HepG2 (cell line): ENCODE measurements at regions of chr19 and their contacts with region 1.

Region 1: GRCh38 chr19:44689056-44689895 is 9.7 kb upstream of the CEACAM16 start:
- DNase-seq: peak; percentile 63
- ATAC-seq: peak; percentile 85
- H3K4me3 ChIP-seq: peak overlapping the region in 2 of 3 experiments; percentile 18 to 52; a peak in 2 of 6 replicates
- H3K27ac ChIP-seq: no peak overlapping the region
- H3K4me1 ChIP-seq: peaks cover 63% of the 10 kb centered on the region
- H3K27me3 ChIP-seq: no peaks in the 10 kb centered on the region
- CTCF ChIP-seq: peak; percentile 97
- EP300 ChIP-seq: no peak
- POLR2A ChIP-seq: no peak
- RAD21 ChIP-seq: peak; percentile 93

Region 2: GRCh38 chr19:44712864-44713515 is 23.7 kb after region 1 on chr19:
- CTCF ChIA-PET with region 1: interaction called, 3 read pairs
- POLR2A ChIA-PET with region 1: interaction called, 94 read pairs
- in situ Hi-C with region 1: no loop called
- intact Hi-C with region 1: loop called (anchors 2 kb)
- DNase-seq: peak; percentile 65
- ATAC-seq: peak; percentile 80
- H3K4me3 ChIP-seq: no peak overlapping the region
- H3K27ac ChIP-seq: no peak overlapping the region
- H3K4me1 ChIP-seq: peaks cover 37% of the 10 kb centered on the region
- H3K27me3 ChIP-seq: no peaks in the 10 kb centered on the region
- CTCF ChIP-seq: no peak
- EP300 ChIP-seq: no peak
- POLR2A ChIP-seq: no peak
- RAD21 ChIP-seq: no peak

Region 3: DNA sequence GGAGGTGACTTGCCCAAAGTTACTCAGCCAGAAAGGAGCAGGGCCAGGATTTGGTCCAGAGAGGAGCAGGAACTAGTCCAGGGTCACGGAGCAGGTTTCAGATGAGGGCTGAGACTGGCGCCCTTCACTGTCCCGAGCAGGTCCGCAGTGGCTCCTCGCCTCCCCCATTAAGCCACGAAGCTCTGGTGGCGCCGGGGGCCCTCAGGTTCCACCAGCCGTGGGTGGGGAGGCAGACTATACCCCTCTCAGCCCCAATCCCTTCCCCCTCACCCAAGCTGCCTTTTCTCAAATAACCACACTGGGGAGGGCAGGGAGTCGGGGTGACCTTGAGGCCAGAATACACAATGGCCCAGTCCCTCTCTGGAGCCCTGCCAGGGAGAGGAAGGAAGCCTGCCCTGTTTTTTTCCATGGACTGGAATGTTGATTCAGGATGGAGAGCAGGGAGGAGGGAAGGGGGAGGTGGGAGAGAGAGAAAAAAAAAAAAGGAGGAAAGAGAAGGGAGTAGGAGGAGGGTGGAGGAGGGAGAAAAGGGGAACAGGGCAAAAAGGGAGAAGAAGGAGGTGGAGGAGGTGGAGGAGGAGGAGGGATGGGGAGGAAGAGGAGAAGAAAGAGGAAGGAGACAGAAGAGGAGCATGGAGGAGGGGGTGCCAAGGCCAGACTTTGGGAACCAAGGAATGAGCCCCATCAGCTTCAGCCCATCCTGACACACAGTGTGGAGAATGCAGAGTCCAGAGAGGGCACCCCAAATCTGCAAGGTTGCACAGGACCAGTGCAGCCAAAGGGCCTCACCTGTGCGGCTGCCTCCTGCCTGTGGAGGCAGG is 29.4 kb after region 1 on chr19:
- CTCF ChIA-PET with region 1: interaction called, 18 read pairs
- POLR2A ChIA-PET with region 1: interaction called, 94 read pairs
- in situ Hi-C with region 1: loop called (anchors 5 kb)
- intact Hi-C with region 1: loop called (anchors 2 kb)
- DNase-seq: peak; percentile 98
- ATAC-seq: peak; percentile 75
- H3K4me3 ChIP-seq: peak overlapping the region; percentile 62 to 82 (median 66)
- H3K27ac ChIP-seq: peak overlapping the region; percentile 95
- H3K4me1 ChIP-seq: peaks cover 75% of the 10 kb centered on the region
- H3K27me3 ChIP-seq: no peaks in the 10 kb centered on the region; a peak in 1 of 5 replicates
- CTCF ChIP-seq: no peak; the same call in 1 of the 2 replicates
- EP300 ChIP-seq: peak; percentile 60 to 96; a peak in 3 of 4 replicates
- POLR2A ChIP-seq: peak; percentile 44 to 74; a peak in 3 of 4 replicates
- RAD21 ChIP-seq: peak; percentile 38

Region 4: DNA sequence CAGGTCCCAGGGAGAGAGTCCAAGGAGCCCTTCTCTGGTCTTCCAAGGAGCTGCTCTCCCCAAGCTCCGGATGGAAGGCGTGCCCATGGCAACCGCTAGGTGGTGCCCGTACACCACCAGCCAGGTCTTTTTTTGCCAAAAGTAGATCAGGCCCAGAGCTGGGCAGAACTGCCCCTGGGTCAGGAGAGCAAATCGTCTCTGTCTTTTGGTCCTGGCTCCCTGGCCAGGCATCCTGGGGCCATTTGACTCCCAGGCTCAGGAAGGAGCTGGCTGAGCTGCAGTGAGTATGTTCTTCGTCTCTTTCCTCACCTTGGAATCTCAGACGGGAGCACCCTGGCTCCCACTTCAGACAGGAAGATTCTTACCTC is 34.7 kb after region 1 on chr19:
- CTCF ChIA-PET with region 1: interaction called, 18 read pairs
- POLR2A ChIA-PET with region 1: interaction called, 94 read pairs
- in situ Hi-C with region 1: loop called (anchors 5 kb)
- intact Hi-C with region 1: loop called (anchors 2 kb)
- DNase-seq: peak; percentile 64
- ATAC-seq: peak; percentile 71
- H3K4me3 ChIP-seq: peak overlapping the region in 2 of 3 experiments; percentile 11 to 61; a peak in 2 of 6 replicates
- H3K27ac ChIP-seq: no peak overlapping the region
- H3K4me1 ChIP-seq: peaks cover 90% of the 10 kb centered on the region
- H3K27me3 ChIP-seq: no peaks in the 10 kb centered on the region
- CTCF ChIP-seq: peak; percentile 98
- EP300 ChIP-seq: no peak
- POLR2A ChIP-seq: no peak
- RAD21 ChIP-seq: peak; percentile 98

Region 5: GRCh38 chr19:44764975-44765948 is 76.0 kb after region 1 on chr19:
- CTCF ChIA-PET with region 1: interaction called, 34 read pairs
- POLR2A ChIA-PET with region 1: interaction called, 10 read pairs
- in situ Hi-C with region 1: loop called (anchors 5 kb)
- intact Hi-C with region 1: loop called (anchors 1 kb)
- DNase-seq: peak; percentile 91
- ATAC-seq: peak; percentile 61
- H3K4me3 ChIP-seq: 0 out of 6 replicates have a peak overlapping the region, but pooled peaks of 1 of the 3 experiments have one; percentile 3
- H3K27ac ChIP-seq: peak overlapping the region; percentile 51
- H3K4me1 ChIP-seq: peaks cover 61% of the 10 kb centered on the region
- H3K27me3 ChIP-seq: no peaks in the 10 kb centered on the region
- CTCF ChIP-seq: no peak
- EP300 ChIP-seq: peak; percentile 71 to 87; a peak in 3 of 4 replicates
- POLR2A ChIP-seq: no peak
- RAD21 ChIP-seq: no peak

Region 6: GRCh38 chr19:44770550-44771257 is 81.4 kb after region 1 on chr19:
- CTCF ChIA-PET with region 1: interaction called, 34 read pairs
- POLR2A ChIA-PET with region 1: interaction called, 10 read pairs
- in situ Hi-C with region 1: loop called (anchors 5 kb)
- intact Hi-C with region 1: loop called (anchors 1 kb)
- DNase-seq: peak; percentile 89
- ATAC-seq: peak; percentile 98
- H3K4me3 ChIP-seq: no peak overlapping the region
- H3K27ac ChIP-seq: no peak overlapping the region
- H3K4me1 ChIP-seq: peaks cover 46% of the 10 kb centered on the region
- H3K27me3 ChIP-seq: no peaks in the 10 kb centered on the region
- CTCF ChIP-seq: peak; percentile 91
- EP300 ChIP-seq: no peak
- POLR2A ChIP-seq: no peak
- RAD21 ChIP-seq: peak; percentile 95

Region 7: GRCh38 chr19:44845612-44846454 is 156.6 kb after region 1 on chr19 and contains the start of gene NECTIN2:
- CTCF ChIA-PET with region 1: interaction called, 11 read pairs
- POLR2A ChIA-PET with region 1: interaction called, 3 read pairs
- in situ Hi-C with region 1: loop called (anchors 5 kb)
- intact Hi-C with region 1: loop called (anchors 1 kb)
- DNase-seq: peak; percentile 95
- ATAC-seq: peak; percentile 61
- H3K4me3 ChIP-seq: peak within 1 kb of the TSS; percentile 76 to 95 (median 84)
- H3K27ac ChIP-seq: peak within 1 kb of the TSS; percentile 95
- H3K4me1 ChIP-seq: peaks cover 48% of the 10 kb centered on the region
- H3K27me3 ChIP-seq: no peaks in the 10 kb centered on the region; a peak in 1 of 5 replicates
- CTCF ChIP-seq: peak; percentile 94
- EP300 ChIP-seq: no peak
- POLR2A ChIP-seq: peak; percentile 62 to 87
- RAD21 ChIP-seq: peak; percentile 30; the same call in 1 of the 2 replicates
- total RNA-seq, gene NECTIN2: 32.7 and 75.4 TPM in 2 replicates